Common myeloid progenitor, CD34-positive (primary cell): ENCODE measurements at regions of chr11 and their contacts with region 1.

Region 1: DNA sequence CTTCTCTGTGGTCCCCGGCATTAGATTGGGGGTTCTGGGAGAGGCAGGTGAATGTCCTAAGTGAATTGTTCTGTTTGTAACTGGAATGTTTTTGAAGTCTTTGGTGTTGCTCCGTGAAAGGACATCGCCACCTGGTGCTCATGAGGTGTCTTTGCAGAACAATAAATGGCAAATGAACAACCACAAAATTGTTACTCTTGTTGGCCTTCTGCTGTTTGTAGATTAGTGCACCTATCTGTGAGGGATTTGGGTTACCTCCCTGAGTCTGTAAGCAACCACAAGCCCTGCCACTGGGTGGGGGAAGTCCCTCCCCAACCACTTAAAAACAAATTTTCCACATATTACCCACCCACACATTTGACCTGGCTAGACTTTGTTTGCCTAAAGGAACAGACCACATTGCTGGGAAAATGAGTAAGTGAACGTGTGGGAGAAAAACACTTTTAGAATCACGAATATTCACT is 4.7 kb downstream of the MPEG1 start:
- DNase-seq: peak; percentile 61 to 85 (median 80)
- H3K4me3 ChIP-seq: peak overlapping the region in 1 of 7 experiments; percentile 56
- H3K27ac ChIP-seq: no peak overlapping the region
- H3K4me1 ChIP-seq: peaks cover 0 to 14% (median 6%) of the 10 kb centered on the region in 4 experiments
- H3K27me3 ChIP-seq: no peaks in the 10 kb centered on the region

Region 2: GRCh38 chr11:59171508-59172322 is 36.3 kb before region 1 on chr11 and contains the start of gene DTX4:
- CTCF ChIA-PET with region 1: interaction called, 259 read pairs
- POLR2A ChIA-PET with region 1: interaction called, 4 read pairs
- DNase-seq: peak; percentile 91 to 95 (median 95)
- H3K4me3 ChIP-seq: peak within 1 kb of the TSS; percentile 61 to 82 (median 71)
- H3K27ac ChIP-seq: no peak within 1 kb of the TSS
- H3K4me1 ChIP-seq: peaks cover 0 to 21% (median 16%) of the 10 kb centered on the region in 4 experiments
- H3K27me3 ChIP-seq: peaks cover 0 to 34% (median 21%) of the 10 kb centered on the region in 5 experiments

Region 3: GRCh38 chr11:59186130-59186594 is 21.9 kb before region 1 on chr11:
- CTCF ChIA-PET with region 1: interaction called, 259 read pairs
- POLR2A ChIA-PET with region 1: no interaction called
- DNase-seq: peak; percentile 25 to 38 (median 33)
- H3K4me3 ChIP-seq: no peak overlapping the region
- H3K27ac ChIP-seq: no peak overlapping the region
- H3K4me1 ChIP-seq: peaks cover 0 to 5% (median 1%) of the 10 kb centered on the region in 4 experiments
- H3K27me3 ChIP-seq: no peaks in the 10 kb centered on the region

Region 4: DNA sequence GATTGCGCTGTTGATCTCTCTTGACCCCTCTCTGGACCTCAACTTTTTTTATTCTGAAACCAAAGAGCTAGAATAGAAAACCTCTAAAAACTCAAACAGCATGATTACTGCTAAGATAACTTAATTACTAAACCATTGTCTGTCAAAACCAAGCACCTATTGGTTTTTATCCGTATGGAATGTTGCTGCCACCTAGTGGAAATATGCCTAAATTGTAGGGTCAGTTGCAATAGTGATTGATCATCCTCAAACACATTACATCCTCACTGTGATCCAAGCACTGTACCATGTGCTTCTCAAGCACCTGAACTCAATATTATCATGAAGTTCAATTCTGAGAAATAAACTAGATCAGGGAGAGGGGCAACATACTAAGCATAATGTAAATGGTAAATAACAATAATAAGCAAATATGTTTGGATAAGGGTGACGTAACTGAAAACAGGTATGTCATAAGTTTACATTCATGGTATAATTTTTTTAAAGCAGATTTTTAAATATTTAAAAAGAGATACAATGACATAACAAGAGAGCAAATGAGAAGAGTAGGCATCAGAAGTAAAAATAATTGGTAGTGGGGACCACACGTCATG is 222.0 kb after region 1 on chr11:
- CTCF ChIA-PET with region 1: interaction called, 27 read pairs
- POLR2A ChIA-PET with region 1: no interaction called
- DNase-seq: peak; percentile 72 to 85 (median 79)
- H3K4me3 ChIP-seq: no peak overlapping the region
- H3K27ac ChIP-seq: no peak overlapping the region
- H3K4me1 ChIP-seq: no peaks in the 10 kb centered on the region
- H3K27me3 ChIP-seq: no peaks in the 10 kb centered on the region